ENCODE measurements at regions of chr14 and their contacts with region 1.

Region 1: GRCh38 chr14:56774503-56774902 is 35.8 kb downstream of the OTX2 start:
- DNase-seq: no peak
- H3K4me3 ChIP-seq: no peak overlapping the region
- H3K27ac ChIP-seq: no peak overlapping the region
- H3K4me1 ChIP-seq: no peaks in the 10 kb centered on the region
- H3K27me3 ChIP-seq: no peaks in the 10 kb centered on the region
- CTCF ChIP-seq: no peak

Region 2: DNA sequence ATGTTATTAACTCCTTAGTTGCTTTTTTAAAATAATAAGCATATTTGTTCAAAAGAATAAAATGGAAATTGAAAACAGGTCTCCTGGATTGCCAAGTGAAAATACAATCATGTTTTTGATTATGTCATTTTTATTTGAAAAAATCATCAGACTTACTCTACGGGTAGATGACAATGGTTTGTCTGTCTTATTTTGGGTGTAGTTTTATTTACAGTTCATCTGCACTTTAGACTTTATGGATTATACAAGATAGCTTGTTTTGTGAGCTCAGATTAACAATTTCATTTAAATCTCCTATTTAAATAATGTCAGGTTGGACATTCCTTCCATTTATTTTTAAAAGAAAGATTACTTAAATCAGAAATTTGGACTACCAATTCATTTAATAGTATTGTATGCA is 180.1 kb before region 1 on chr14:
- CTCF ChIA-PET with region 1: no interaction called
- POLR2A ChIA-PET with region 1: no interaction called
- intact Hi-C with region 1: no loop called
- DNase-seq: no peak
- H3K4me3 ChIP-seq: no peak overlapping the region
- H3K27ac ChIP-seq: no peak overlapping the region
- H3K4me1 ChIP-seq: peaks cover 14% of the 10 kb centered on the region
- H3K27me3 ChIP-seq: no peaks in the 10 kb centered on the region
- CTCF ChIP-seq: no peak

Region 3: GRCh38 chr14:56816574-56817391 is 42.3 kb after region 1 on chr14:
- CTCF ChIA-PET with region 1: no interaction called
- POLR2A ChIA-PET with region 1: interaction called, 10 read pairs
- intact Hi-C with region 1: no loop called
- DNase-seq: peak; percentile 67
- H3K4me3 ChIP-seq: peak overlapping the region; percentile 71
- H3K27ac ChIP-seq: peak overlapping the region; percentile 95
- H3K4me1 ChIP-seq: peaks cover 37% of the 10 kb centered on the region
- H3K27me3 ChIP-seq: no peaks in the 10 kb centered on the region
- CTCF ChIP-seq: no peak